Activated T-helper 1 cell treated with anti-CD3 and anti-CD28 coated beads, Interleukin-12 subunit alpha, Interleukin-12 subunit beta, Interleukin-2, Interleukin-4 antibody, amounts not matched to agents 30 ng/mL and 10 ng/mL and 1 ng/mL, durations not matched to agents 14 hours and 24 hours and 36 hours (primary cell): ENCODE measurements at regions of chr17 and their contacts with region 1.

Region 1: GRCh38 chr17:38667099-38667786 is 7.5 kb downstream of the EPOP start:
- DNase-seq: peak; percentile 54
- H3K4me3 Mint-ChIP-seq: no peak overlapping the region
- H3K27ac Mint-ChIP-seq: no peak overlapping the region
- H3K4me1 Mint-ChIP-seq: peaks cover 17% of the 10 kb centered on the region
- H3K27me3 Mint-ChIP-seq: peaks cover 64% of the 10 kb centered on the region

Region 2: DNA sequence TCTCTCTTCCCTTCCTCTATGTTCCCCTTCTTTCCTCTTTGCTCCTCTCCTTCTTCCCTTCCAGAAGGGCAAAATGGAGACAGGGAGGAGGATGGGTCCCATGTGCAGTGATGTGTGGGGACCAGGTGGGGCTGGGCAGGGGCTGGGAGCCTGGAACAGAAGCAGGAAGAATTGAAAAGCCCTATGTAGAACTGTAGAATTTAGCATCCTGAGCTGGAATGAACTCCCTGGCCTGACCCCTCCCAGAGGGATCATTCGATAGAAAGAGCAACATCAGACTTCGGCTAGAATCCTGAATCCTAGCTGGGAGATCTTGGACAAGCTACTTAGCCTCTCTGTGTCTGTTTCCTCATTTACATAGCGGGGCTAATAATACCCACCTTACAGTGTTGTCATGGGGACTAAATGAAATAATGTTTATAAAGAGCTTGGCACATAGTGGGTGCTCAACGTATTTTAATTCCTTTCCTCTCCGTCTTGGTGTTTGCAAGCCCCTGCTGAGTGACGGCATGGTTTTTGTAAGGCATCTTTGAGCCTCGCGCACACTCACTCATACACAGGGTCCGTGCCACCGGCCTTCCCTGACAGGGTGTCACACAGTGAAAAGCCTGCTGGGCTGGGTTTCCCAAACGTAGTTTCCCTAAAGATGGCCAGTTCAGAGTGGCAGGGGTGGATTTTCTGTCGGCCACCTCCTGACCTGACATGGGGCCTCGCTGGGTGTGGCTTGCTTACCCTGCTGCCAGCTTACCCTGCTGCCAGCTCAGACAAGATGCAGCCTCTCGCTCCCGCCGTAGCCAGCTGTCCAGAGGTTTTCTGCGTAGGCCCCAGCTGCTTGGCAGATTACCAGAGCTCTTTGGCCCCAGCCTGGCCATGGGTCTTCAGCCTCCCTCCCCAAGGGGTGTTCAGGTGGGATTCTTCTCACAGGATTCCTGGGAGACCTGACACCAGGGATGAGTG is 245.1 kb before region 1 on chr17:
- intact Hi-C with region 1: loop called (anchors 2 kb)
- DNase-seq: no peak
- H3K4me3 Mint-ChIP-seq: no peak overlapping the region
- H3K27ac Mint-ChIP-seq: no peak overlapping the region
- H3K4me1 Mint-ChIP-seq: no peaks in the 10 kb centered on the region
- H3K27me3 Mint-ChIP-seq: peaks cover 70% of the 10 kb centered on the region

Region 3: DNA sequence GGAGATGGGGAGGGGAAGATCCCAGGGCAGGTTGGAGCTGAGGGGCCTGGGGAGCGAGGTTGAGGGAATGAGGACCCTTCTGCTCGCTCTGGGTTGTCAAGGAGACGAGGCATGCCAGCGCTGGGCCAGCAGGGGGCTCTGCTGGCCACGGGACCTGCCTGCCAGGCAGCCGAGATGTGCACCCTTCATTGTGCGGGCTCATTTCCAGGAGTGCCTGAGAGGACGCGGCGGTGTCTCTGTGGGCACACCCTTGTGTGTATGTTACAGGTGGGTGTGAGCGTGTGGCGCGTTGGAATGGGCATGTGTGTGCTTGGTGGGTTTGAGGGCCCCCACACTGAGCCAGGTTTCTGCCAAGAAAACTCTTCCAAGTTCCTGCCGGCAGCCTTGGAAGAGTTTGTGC is 223.1 kb before region 1 on chr17:
- intact Hi-C with region 1: loop called (anchors 1 kb)
- DNase-seq: peak; percentile 24
- H3K4me3 Mint-ChIP-seq: no peak overlapping the region
- H3K27ac Mint-ChIP-seq: no peak overlapping the region
- H3K4me1 Mint-ChIP-seq: no peaks in the 10 kb centered on the region
- H3K27me3 Mint-ChIP-seq: peaks cover 13% of the 10 kb centered on the region

Region 4: DNA sequence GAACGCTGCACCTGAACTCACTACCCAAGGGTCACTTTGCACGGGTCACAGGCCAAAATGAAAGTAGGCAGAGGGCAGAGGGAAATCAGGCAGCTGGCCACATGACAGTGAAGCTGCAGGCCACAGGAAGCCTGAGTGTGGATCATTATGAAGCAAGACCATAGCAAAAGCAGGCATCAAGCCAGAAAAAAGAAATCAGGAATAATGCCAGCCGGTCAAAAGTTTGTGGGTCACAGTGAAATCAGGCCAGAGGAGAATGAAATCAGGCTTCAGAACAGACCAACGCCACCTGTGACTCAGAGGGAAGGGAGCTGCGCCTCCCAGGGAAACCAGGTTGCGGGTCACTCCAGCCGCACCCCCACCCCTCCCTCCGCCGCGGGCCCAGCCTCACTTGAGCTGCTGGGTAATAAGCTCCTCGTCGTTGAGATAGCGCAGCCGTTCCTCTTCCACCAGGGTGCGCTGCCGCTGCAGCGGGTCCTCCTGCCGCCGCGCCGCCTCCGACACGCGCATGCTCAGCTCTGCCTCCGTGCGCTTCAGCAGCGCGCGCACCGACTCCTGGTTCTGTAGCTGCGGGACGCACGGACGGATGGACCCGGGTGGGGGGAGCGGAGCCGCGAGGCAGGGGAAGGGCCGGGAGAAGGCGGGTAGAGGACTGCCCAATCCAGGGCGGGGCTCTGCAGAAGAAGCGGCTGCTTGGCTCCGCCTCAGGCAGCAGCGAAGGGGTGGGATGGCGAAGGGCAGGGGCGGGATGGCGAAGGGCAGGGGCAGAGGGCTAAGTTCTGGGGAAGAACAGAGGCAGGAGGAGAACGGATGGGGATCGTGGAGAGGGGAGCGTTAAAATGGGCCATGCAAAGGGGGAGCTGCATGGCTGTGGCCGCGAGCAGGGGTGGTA is 109.2 kb before region 1 on chr17:
- intact Hi-C with region 1: loop called (anchors 1 kb)
- DNase-seq: peak; percentile 87
- H3K4me3 Mint-ChIP-seq: peak overlapping the region; percentile 95
- H3K27ac Mint-ChIP-seq: peak overlapping the region; percentile 69
- H3K4me1 Mint-ChIP-seq: peaks cover 27% of the 10 kb centered on the region
- H3K27me3 Mint-ChIP-seq: peaks cover 48% of the 10 kb centered on the region

Region 5: GRCh38 chr17:38605888-38606645 is 61.2 kb before region 1 on chr17 and contains the start of gene SRCIN1:
- intact Hi-C with region 1: loop called (anchors 5 kb)
- DNase-seq: peak; percentile 44
- H3K4me3 Mint-ChIP-seq: peak within 1 kb of the TSS; percentile 73
- H3K27ac Mint-ChIP-seq: peak within 1 kb of the TSS; percentile 23
- H3K4me1 Mint-ChIP-seq: peaks cover 5% of the 10 kb centered on the region
- H3K27me3 Mint-ChIP-seq: peaks cover 69% of the 10 kb centered on the region
- total RNA-seq, gene SRCIN1: 0.22 and 0.44 TPM in 2 replicates